Gastrocnemius medialis (tissue), 4 donors: ENCODE measurements at regions of chr18 and their contacts with region 1.

Region 1: DNA sequence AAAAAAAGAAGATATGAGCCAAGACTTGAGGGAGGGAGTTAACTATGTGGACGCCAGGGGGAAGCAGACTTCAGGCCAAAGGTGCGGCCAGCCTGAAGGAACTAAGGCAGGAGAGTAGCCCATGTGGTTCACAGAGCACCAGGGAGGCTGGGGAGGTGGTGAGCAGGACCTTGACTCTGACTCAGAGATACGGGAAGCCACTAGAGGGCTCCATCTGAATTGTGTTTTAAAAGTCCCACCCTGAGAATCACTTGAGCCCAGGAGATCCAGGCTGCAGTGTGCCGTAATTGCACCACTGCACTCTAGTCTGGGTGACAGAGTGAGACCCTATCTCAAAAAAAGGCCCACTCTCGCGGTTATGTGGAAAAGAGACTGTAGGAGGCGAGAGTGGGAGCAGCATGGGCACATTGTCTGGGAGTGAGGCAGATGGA is 12.3 kb downstream of the CEP192 start:
- DNase-seq: no peak
- ATAC-seq: no peak
- H3K4me3 ChIP-seq: no peak overlapping the region
- H3K27ac ChIP-seq: no peak overlapping the region
- H3K4me1 ChIP-seq: no peaks in the 10 kb centered on the region
- H3K27me3 ChIP-seq: no peaks in the 10 kb centered on the region
- CTCF ChIP-seq: no peak
- POLR2A ChIP-seq: no peak

Region 2: GRCh38 chr18:12911025-12911928 is 92.2 kb before region 1 on chr18:
- in situ Hi-C with region 1: loop called in 1 of 4 experiments (anchors 25 kb)
- intact Hi-C with region 1: no loop called
- DNase-seq: no peak
- ATAC-seq: no peak
- H3K4me3 ChIP-seq: peak overlapping the region; percentile 37 to 55 (median 46)
- H3K27ac ChIP-seq: no peak overlapping the region
- H3K4me1 ChIP-seq: no peaks in the 10 kb centered on the region
- H3K27me3 ChIP-seq: peaks cover 12 to 25% (median 22%) of the 10 kb centered on the region in 3 donors
- CTCF ChIP-seq: no peak
- POLR2A ChIP-seq: no peak

Region 3: GRCh38 chr18:13446610-13447461 is 443.4 kb after region 1 on chr18:
- in situ Hi-C with region 1: no loop called
- intact Hi-C with region 1: no loop called
- DNase-seq: no peak
- ATAC-seq: no peak
- H3K4me3 ChIP-seq: peak overlapping the region in 3 of 4 donors; percentile 18 to 39 (median 25)
- H3K27ac ChIP-seq: peak overlapping the region in 3 of 4 donors; percentile 46 to 71 (median 46)
- H3K4me1 ChIP-seq: peaks cover 21 to 40% of the 10 kb centered on the region in 2 donors
- H3K27me3 ChIP-seq: no peaks in the 10 kb centered on the region
- CTCF ChIP-seq: no peak
- POLR2A ChIP-seq: no peak

Region 4: DNA sequence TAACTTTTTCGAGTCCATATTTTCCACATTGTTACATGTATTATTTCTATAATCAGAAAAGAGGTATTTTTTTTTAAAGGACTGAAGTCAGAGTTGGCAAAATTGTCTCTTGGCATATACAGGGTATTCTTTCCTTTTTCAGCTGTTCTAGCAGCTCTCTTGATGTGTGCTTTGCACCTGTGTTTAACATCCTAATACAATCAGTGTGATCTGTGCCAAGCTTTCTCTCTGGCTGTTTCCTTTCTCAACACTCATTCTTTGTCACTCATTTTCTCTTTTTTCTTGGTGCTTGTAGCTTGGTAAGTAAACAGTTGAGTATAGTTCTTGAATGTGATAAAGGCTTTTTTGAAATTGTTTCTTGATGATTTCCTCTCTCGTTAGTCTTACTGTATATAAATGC is 732.2 kb after region 1 on chr18:
- in situ Hi-C with region 1: no loop called
- intact Hi-C with region 1: no loop called
- DNase-seq: no peak
- ATAC-seq: no peak
- H3K4me3 ChIP-seq: no peak overlapping the region
- H3K27ac ChIP-seq: no peak overlapping the region
- H3K4me1 ChIP-seq: no peaks in the 10 kb centered on the region
- H3K27me3 ChIP-seq: no peaks in the 10 kb centered on the region
- CTCF ChIP-seq: no peak
- POLR2A ChIP-seq: no peak